ENCODE measurements at regions of chrX and their contacts with region 1.

Region 1: GRCh38 chrX:31213941-31214340 is 142.1 kb upstream of the FTHL17 start:
- DNase-seq: no peak
- ATAC-seq: peak; percentile 64
- H3K4me3 ChIP-seq: no peak overlapping the region
- H3K27ac ChIP-seq: no peak overlapping the region
- H3K4me1 ChIP-seq: no peaks in the 10 kb centered on the region
- H3K27me3 ChIP-seq: no peaks in the 10 kb centered on the region
- CTCF ChIP-seq: peak; percentile 59 to 62 (median 61)
- EP300 ChIP-seq: no peak
- POLR2A ChIP-seq: no peak
- RAD21 ChIP-seq: peak; percentile 83

Region 2: DNA sequence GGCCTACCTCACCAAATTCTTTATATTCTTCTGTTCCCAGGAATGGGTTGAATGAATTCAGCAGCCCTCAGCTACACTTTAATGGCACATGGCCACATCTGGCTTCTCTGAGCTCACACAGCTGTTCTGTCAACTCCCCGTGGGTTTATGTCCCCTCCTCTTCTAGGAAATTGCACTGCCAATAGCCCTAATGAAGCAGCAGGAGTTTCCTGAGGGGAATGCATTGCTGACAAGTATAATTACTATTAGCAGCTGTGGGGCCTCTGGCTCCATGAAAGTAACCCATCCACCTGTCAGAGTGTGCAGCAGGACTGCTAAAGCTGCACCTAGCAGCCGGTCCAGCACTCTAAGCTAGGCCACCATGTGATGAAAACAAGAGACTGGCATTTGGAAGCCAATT is 192.4 kb before region 1 on chrX:
- CTCF ChIA-PET with region 1: no interaction called
- POLR2A ChIA-PET with region 1: no interaction called
- RAD21 ChIA-PET with region 1: no interaction called
- SMC1A ChIA-PET with region 1: no interaction called
- in situ Hi-C with region 1: no loop called
- intact Hi-C with region 1: no loop called
- DNase-seq: no peak
- ATAC-seq: no peak
- H3K4me3 ChIP-seq: no peak overlapping the region
- H3K27ac ChIP-seq: no peak overlapping the region
- H3K4me1 ChIP-seq: no peaks in the 10 kb centered on the region
- H3K27me3 ChIP-seq: 0 out of 4 replicates have a peak, but pooled peaks cover 0 to 1% of the 10 kb centered on the region in 2 experiments
- CTCF ChIP-seq: no peak
- EP300 ChIP-seq: no peak
- POLR2A ChIP-seq: no peak
- RAD21 ChIP-seq: no peak

Region 3: DNA sequence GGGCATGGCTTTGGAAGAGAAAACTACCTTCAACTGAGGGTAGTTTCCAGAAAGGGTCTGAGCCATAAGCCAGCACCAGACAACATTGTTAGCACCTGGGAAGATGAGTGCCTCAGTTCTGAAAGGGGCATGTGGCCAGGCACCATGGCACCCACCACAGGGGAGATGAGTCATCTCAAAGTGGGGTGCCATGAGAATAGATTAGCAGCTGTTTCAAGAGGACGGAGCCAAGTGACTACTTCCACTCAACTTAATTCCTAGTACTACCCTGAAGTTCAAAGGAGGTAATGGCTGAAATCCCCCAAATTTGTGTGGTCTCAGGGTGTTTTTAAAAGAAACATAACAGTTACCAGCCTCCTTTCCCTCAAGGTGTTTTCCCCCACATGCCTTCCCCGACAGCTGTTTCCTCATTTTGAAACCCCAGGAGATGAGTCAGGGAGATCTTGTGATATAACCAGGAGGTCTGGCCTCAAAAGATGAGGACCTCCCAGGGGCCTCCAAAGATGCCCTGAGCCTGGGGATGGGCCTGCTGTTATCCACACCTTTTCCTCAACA is 114.3 kb before region 1 on chrX:
- CTCF ChIA-PET with region 1: interaction called, 5 read pairs
- POLR2A ChIA-PET with region 1: no interaction called
- RAD21 ChIA-PET with region 1: no interaction called
- SMC1A ChIA-PET with region 1: interaction called, 3 read pairs
- in situ Hi-C with region 1: no loop called
- intact Hi-C with region 1: loop called (anchors 5 kb)
- DNase-seq: peak; percentile 77
- ATAC-seq: peak; percentile 93
- H3K4me3 ChIP-seq: no peak overlapping the region
- H3K27ac ChIP-seq: peak overlapping the region; percentile 54
- H3K4me1 ChIP-seq: peaks cover 14% of the 10 kb centered on the region; the same call in 1 of the 2 replicates
- H3K27me3 ChIP-seq: no peaks in the 10 kb centered on the region
- CTCF ChIP-seq: no peak
- EP300 ChIP-seq: peak; percentile 64 to 78
- POLR2A ChIP-seq: no peak
- RAD21 ChIP-seq: 0 out of 2 replicates have a peak, but pooled peaks have one; percentile 7

Region 4: GRCh38 chrX:31251336-31251735 is 37.4 kb after region 1 on chrX:
- CTCF ChIA-PET with region 1: interaction called, 11 read pairs
- POLR2A ChIA-PET with region 1: no interaction called
- RAD21 ChIA-PET with region 1: interaction called, 3 read pairs
- SMC1A ChIA-PET with region 1: interaction called, 10 read pairs
- in situ Hi-C with region 1: no loop called
- intact Hi-C with region 1: no loop called
- DNase-seq: no peak
- ATAC-seq: no peak
- H3K4me3 ChIP-seq: no peak overlapping the region
- H3K27ac ChIP-seq: no peak overlapping the region
- H3K4me1 ChIP-seq: no peaks in the 10 kb centered on the region
- H3K27me3 ChIP-seq: no peaks in the 10 kb centered on the region
- CTCF ChIP-seq: no peak
- EP300 ChIP-seq: no peak
- POLR2A ChIP-seq: no peak
- RAD21 ChIP-seq: no peak

Region 5: GRCh38 chrX:31271615-31272471 is 57.9 kb after region 1 on chrX:
- CTCF ChIA-PET with region 1: interaction called, 20 read pairs
- POLR2A ChIA-PET with region 1: no interaction called
- RAD21 ChIA-PET with region 1: interaction called, 14 read pairs
- SMC1A ChIA-PET with region 1: interaction called, 38 read pairs
- in situ Hi-C with region 1: no loop called
- intact Hi-C with region 1: no loop called
- DNase-seq: no peak
- ATAC-seq: peak; percentile 59
- H3K4me3 ChIP-seq: no peak overlapping the region
- H3K27ac ChIP-seq: no peak overlapping the region
- H3K4me1 ChIP-seq: no peaks in the 10 kb centered on the region
- H3K27me3 ChIP-seq: 0 out of 4 replicates have a peak, but pooled peaks cover 0 to 2% of the 10 kb centered on the region in 2 experiments
- CTCF ChIP-seq: no peak
- EP300 ChIP-seq: no peak
- POLR2A ChIP-seq: no peak
- RAD21 ChIP-seq: no peak

Region 6: DNA sequence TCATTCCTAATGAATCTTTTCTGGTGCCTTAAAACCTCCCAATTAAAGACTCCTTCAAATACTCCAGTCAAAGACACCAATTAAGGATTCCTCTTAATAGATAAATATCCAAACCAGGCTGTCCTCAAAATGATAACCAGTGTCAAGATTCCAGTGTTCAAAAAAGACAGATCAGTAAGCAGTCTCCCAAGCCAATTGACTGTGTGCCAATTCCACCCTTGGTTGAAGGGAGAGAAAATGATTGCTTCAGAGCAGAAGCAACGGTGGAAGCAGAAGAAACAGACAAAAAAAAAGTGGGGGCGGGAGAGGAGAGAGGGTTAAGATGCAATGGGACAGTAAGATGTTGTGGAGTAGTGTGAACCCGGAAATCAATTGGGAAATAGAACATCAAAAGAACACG is 73.9 kb after region 1 on chrX:
- CTCF ChIA-PET with region 1: interaction called, 93 read pairs
- POLR2A ChIA-PET with region 1: no interaction called
- RAD21 ChIA-PET with region 1: interaction called, 113 read pairs
- SMC1A ChIA-PET with region 1: interaction called, 138 read pairs
- in situ Hi-C with region 1: no loop called
- intact Hi-C with region 1: loop called (anchors 1 kb)
- DNase-seq: no peak
- ATAC-seq: no peak
- H3K4me3 ChIP-seq: no peak overlapping the region
- H3K27ac ChIP-seq: no peak overlapping the region
- H3K4me1 ChIP-seq: no peaks in the 10 kb centered on the region
- H3K27me3 ChIP-seq: no peaks in the 10 kb centered on the region
- CTCF ChIP-seq: no peak
- EP300 ChIP-seq: no peak
- POLR2A ChIP-seq: no peak
- RAD21 ChIP-seq: no peak

Region 7: DNA sequence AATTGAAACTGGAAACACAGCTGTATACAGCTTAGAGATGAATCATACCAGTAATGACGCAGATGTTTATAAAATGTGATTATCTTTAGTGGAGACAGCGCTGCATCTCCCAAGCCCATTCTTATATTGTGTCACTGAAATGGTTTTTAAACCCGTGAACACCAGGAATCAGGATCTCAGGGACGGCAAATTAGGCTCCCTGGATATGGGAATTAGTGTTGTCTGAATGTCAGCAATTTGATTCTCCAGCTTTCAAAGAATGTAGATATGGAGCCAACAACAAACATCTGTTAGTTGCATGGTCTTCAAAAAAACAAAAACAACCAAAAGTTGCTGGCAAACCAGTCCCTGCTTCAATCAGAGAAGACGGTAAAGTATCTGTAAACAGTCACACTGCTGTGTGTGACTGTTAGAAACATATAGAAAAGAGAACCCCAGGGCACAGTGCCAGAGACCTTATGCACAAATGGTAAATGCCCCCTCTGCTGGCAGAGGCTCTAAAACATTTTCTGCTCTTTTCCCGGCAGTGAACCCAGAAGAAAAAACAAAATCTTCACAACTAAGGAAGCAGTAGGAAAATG is 209.8 kb after region 1 on chrX:
- CTCF ChIA-PET with region 1: interaction called, 35 read pairs
- POLR2A ChIA-PET with region 1: no interaction called
- RAD21 ChIA-PET with region 1: interaction called, 10 read pairs
- SMC1A ChIA-PET with region 1: interaction called, 39 read pairs
- in situ Hi-C with region 1: loop called (anchors 10 kb)
- intact Hi-C with region 1: loop called (anchors 1 kb)
- DNase-seq: no peak
- ATAC-seq: peak; percentile 72
- H3K4me3 ChIP-seq: no peak overlapping the region
- H3K27ac ChIP-seq: no peak overlapping the region
- H3K4me1 ChIP-seq: no peaks in the 10 kb centered on the region
- H3K27me3 ChIP-seq: no peaks in the 10 kb centered on the region
- CTCF ChIP-seq: peak; percentile 14 to 40 (median 34); a peak in 4 of 6 replicates
- EP300 ChIP-seq: no peak
- POLR2A ChIP-seq: no peak
- RAD21 ChIP-seq: no peak